Aorta (tissue), 5 donors: ENCODE measurements at regions of chrX and their contacts with region 1.

Region 1: DNA sequence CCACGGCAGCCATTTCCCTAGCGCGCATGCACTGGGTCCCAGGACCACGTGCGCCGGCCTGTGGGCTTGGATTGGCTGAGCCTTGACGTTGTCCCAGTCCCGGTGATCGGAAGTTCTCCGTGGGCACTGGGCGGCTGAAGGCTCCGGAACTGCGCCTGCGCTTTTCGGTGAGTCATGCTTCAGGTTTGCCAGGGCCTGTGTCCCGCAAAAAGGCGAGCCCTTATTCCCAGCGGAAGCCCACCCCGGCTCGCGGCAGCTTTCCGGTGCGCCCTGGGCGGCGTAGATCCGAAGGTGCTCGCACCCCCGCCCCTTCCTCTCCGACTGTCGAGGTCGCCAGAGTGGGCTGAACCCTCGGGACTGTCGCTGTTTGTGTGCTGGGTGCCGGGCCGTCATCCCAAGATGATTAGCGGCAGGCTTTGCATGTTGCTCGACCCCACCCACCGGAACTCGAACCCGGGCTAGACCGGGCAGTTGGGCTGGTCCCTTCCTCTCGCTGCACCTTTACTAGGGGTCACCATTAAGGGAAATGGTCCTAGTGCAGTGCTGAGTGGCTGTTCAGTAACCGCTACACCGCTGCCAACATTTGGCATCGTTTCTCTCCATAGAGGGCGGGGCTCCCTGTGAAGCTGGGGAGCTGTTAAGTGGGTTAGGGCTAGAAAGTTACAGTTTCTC is at the start of gene TCEANC:
- DNase-seq: peak; percentile 99
- ATAC-seq: peak; percentile 99
- H3K4me3 ChIP-seq: peak within 1 kb of the TSS; percentile 59 to 77
- H3K27ac ChIP-seq: peak within 1 kb of the TSS; percentile 32 to 92
- H3K4me1 ChIP-seq: peaks cover 0 to 2% of the 10 kb centered on the region in 2 donors
- H3K27me3 ChIP-seq: no peaks in the 10 kb centered on the region
- total RNA-seq, gene TCEANC: 2.3 to 3.9 TPM

Region 2: GRCh38 chrX:13569479-13570260 is 83.5 kb before region 1 on chrX and contains the start of gene EGFL6:
- intact Hi-C with region 1: no loop called
- DNase-seq: peak in 1 of 2 donors; percentile 69
- ATAC-seq: peak; percentile 36
- H3K4me3 ChIP-seq: peak within 1 kb of the TSS in 1 of 2 donors; percentile 18
- H3K27ac ChIP-seq: no peak within 1 kb of the TSS
- H3K4me1 ChIP-seq: no peaks in the 10 kb centered on the region
- H3K27me3 ChIP-seq: no peaks in the 10 kb centered on the region
- total RNA-seq, gene EGFL6: 0.23 to 0.60 TPM

Region 3: DNA sequence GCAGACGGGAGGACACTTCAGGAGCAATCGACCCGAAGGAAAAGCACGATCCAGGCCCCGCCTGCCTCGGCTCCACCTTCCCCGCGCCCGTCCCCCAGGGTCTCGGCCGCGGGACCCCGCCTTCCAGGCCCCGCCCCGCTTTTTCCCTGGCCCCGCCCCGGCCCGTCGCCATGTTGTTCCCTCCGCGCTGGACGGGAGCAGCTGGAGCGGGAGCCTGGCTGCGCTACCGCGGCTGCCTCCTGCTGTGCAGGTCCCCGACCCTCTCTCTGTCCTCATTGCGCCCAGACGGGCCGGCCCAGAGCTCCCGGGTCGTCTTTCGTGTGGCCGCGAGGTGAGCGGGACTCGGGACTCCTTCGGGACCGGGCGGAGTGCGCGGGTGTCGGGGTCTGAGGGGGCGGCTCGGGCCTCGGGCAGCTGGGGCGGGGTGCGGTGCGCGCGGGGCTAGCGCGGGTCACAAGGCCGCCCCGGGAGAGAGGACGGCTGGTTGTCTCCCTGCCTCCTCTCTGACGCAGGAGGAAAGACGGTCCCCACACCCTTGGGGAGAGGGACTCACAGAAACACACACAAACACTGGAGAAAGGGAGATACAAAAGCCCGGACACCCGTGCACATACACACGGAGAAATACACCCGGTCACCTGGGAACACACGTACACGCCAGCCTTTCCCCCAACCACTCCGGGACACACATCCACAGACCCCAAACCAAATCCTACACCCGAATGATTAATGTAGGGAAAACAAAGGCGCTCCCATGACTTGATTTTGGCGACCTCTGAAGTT is 36.0 kb after region 1 on chrX and contains the start of gene RAB9A:
- intact Hi-C with region 1: loop called in 1 of 2 experiments (anchors 5 kb)
- DNase-seq: peak; percentile 89 to 96
- ATAC-seq: peak; percentile 97
- H3K4me3 ChIP-seq: peak within 1 kb of the TSS; percentile 83 to 90
- H3K27ac ChIP-seq: peak within 1 kb of the TSS in 1 of 2 donors; percentile 88
- H3K4me1 ChIP-seq: peaks cover 0 to 3% of the 10 kb centered on the region in 2 donors
- H3K27me3 ChIP-seq: no peaks in the 10 kb centered on the region
- total RNA-seq, gene RAB9A: 18.2 to 26.2 TPM

Region 4: DNA sequence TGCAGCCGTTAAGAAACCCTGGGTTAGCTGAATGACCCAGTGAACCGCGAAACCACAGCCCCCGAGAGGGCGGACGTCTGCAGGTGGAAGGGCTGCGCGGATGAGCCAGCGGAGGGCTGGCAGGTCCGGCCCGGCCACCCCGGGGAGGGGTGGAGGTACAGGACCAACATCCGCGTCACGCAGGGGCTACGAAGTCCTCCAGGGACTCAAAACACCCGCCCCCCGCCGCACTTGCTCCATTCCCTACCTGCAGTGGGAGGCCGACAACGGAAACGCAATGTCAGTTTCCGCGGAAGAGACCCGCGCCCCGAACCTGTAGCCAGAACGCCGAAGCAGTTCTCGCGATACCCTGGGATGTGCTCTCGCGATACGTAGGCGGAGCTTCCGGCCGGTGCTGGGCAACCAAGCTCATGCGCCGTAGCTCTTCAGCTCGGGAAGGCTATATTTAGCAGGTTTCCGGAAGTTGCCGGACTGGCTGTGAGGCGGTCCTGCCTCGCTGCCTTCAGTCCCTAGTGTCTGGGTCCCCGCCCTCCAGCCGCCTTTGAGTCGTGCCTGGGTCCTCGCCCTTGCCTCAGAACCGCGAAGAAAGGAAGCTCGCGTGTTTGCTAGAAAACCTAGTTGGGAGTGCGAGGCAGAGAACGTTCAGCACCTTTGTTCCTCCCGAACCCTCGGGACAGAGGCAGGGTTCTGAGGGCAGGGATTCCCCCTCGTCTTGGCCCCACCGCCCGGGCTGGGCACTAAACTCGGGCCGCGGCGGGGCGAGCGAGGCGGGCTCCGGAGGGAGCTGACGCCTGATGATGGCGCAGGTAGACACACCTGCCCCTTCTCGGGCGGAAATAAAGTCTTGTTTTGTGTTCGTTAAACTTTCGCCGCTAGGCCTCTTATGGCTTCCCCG is 81.4 kb after region 1 on chrX and contains the starts of genes OFD1 and TRAPPC2:
- intact Hi-C with region 1: loop called in 1 of 2 experiments (anchors 1 kb)
- DNase-seq: peak; percentile 96 to 98
- ATAC-seq: peak; percentile 99
- H3K4me3 ChIP-seq: peak within 1 kb of the TSS; percentile 83 to 90
- H3K27ac ChIP-seq: peak within 1 kb of the TSS in 1 of 2 donors; percentile 58
- H3K4me1 ChIP-seq: no peaks in the 10 kb centered on the region
- H3K27me3 ChIP-seq: no peaks in the 10 kb centered on the region
- total RNA-seq, gene OFD1: 23.8 to 34.6 TPM
- total RNA-seq, gene TRAPPC2: 17.4 to 18.5 TPM